ENCODE measurements at regions of chr5 and their contacts with region 1.

Region 1: GRCh38 chr5:77491783-77492652 is at the start of gene WDR41:
- DNase-seq: peak; percentile 95
- H3K4me3 ChIP-seq: peak within 1 kb of the TSS; percentile 96 to 99 (median 98)
- H3K27ac ChIP-seq: peak within 1 kb of the TSS; percentile 99
- H3K4me1 ChIP-seq: peaks cover 21% of the 10 kb centered on the region
- H3K27me3 ChIP-seq: no peaks in the 10 kb centered on the region
- CTCF ChIP-seq: peak; percentile 76 to 84
- total RNA-seq, gene WDR41: 93.7 to 132 TPM

Region 2: DNA sequence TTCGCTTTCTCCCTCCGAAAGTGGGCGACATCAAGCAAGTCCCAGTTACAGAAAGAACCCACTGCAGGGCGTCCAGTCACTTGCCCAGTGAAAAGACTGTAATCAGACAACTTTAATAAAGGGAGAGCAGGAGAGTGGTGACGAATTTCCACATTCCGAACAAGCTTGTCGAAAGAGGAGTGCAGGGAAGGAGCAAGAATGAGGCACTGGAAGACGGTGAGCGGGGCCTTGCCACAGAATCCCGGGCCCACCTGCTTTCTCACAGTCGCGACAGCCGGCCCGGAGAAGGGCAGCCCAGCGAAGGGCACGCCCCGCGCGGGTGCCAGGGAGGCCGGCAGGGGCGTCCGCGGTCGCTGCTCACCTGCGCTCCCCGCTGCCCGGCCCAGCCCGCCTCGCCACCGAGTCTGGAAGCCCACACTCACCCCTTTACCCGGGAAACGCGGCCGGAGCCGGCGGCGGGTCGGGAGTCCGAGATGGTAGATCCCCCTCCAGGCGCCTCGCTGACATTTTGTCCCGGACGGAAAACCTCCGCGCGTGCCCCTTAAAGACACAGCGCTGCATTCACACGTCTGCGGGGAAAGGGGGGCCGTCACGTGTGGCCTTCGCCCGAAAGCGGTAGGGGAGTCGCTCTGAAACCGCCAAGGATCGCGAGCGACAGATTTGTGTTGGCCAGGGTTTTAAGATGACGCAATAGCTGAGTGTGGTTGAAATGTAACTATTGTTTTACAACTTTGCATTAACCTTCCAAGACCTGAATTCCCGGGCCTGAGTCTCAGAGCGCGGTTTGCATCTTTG is 405.1 kb before region 1 on chr5 and contains the start of gene ZBED3:
- CTCF ChIA-PET with region 1: no interaction called
- dilution Hi-C with region 1: no loop called
- in situ Hi-C with region 1: no loop called
- intact Hi-C with region 1: loop called (anchors 5 kb)
- DNase-seq: peak; percentile 54
- H3K4me3 ChIP-seq: peak within 1 kb of the TSS; percentile 64 to 69 (median 66)
- H3K27ac ChIP-seq: no peak within 1 kb of the TSS
- H3K4me1 ChIP-seq: peaks cover 5% of the 10 kb centered on the region
- H3K27me3 ChIP-seq: no peaks in the 10 kb centered on the region
- CTCF ChIP-seq: peak in 1 of 2 donors; percentile 30
- total RNA-seq, gene ZBED3: 2.8 to 3.2 TPM

Region 3: GRCh38 chr5:77239126-77239741 is 252.8 kb before region 1 on chr5:
- CTCF ChIA-PET with region 1: no interaction called
- dilution Hi-C with region 1: no loop called
- in situ Hi-C with region 1: no loop called
- intact Hi-C with region 1: loop called (anchors 5 kb)
- DNase-seq: peak; percentile 9
- H3K4me3 ChIP-seq: no peak overlapping the region
- H3K27ac ChIP-seq: no peak overlapping the region
- H3K4me1 ChIP-seq: no peaks in the 10 kb centered on the region
- H3K27me3 ChIP-seq: peaks cover 5% of the 10 kb centered on the region
- CTCF ChIP-seq: peak; percentile 22 to 48

Region 4: GRCh38 chr5:77356740-77357139 is 135.3 kb before region 1 on chr5:
- CTCF ChIA-PET with region 1: no interaction called
- dilution Hi-C with region 1: no loop called
- in situ Hi-C with region 1: no loop called
- intact Hi-C with region 1: no loop called
- DNase-seq: peak; percentile 40
- H3K4me3 ChIP-seq: no peak overlapping the region
- H3K27ac ChIP-seq: no peak overlapping the region
- H3K4me1 ChIP-seq: no peaks in the 10 kb centered on the region
- H3K27me3 ChIP-seq: no peaks in the 10 kb centered on the region
- CTCF ChIP-seq: no peak

Region 5: GRCh38 chr5:77426670-77427069 is 65.3 kb before region 1 on chr5:
- CTCF ChIA-PET with region 1: no interaction called
- dilution Hi-C with region 1: no loop called
- in situ Hi-C with region 1: no loop called
- intact Hi-C with region 1: loop called (anchors 5 kb)
- DNase-seq: no peak
- H3K4me3 ChIP-seq: no peak overlapping the region
- H3K27ac ChIP-seq: no peak overlapping the region
- H3K4me1 ChIP-seq: no peaks in the 10 kb centered on the region
- H3K27me3 ChIP-seq: no peaks in the 10 kb centered on the region
- CTCF ChIP-seq: no peak